SK-N-SH (cell line): ENCODE measurements at regions of chr7 and their contacts with region 1.

Region 1: DNA sequence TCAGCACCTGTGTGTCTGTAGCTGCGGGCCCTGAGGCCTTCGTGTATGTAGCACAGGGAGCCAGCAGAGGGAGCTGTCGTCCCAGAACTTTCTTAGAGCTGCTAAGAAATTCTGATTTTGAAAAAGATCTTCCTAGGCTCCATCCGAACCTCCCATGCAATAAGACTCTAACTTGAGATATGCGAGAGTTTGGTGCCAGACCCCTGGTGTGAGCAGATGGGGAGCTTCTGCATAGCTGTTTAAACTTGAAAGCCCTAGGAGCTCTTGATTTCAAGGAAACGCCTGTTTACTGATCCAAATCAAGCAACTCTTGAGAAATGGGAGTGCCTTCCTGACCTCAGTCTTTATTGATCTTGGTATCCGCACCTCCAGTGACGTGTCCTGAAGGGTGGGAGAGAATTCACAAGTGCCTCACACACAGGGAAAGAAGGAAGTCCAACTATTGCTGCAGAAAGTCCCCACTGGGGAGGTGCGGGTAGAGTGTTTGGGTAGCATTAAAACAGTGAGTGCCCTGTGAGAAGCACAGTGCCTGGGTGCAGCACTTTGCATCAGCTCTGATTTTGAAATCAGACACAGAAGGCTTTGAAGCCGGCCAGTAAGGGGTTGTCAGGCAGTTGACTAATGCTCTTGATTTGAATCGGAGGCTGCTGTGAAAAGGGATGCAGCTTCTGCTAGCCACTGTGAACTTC is 66.4 kb upstream of the STRIP2 start:
- DNase-seq: peak; percentile 80
- H3K4me3 ChIP-seq: no peak overlapping the region; a peak in 1 of 4 replicates
- H3K27ac ChIP-seq: no peak overlapping the region
- H3K4me1 ChIP-seq: peaks cover 0 to 3% of the 10 kb centered on the region in 2 experiments; a peak in 1 of 4 replicates
- H3K27me3 ChIP-seq: no peaks in the 10 kb centered on the region
- CTCF ChIP-seq: peak; percentile 99
- EP300 ChIP-seq: no peak
- RAD21 ChIP-seq: peak; percentile 96

Region 2: DNA sequence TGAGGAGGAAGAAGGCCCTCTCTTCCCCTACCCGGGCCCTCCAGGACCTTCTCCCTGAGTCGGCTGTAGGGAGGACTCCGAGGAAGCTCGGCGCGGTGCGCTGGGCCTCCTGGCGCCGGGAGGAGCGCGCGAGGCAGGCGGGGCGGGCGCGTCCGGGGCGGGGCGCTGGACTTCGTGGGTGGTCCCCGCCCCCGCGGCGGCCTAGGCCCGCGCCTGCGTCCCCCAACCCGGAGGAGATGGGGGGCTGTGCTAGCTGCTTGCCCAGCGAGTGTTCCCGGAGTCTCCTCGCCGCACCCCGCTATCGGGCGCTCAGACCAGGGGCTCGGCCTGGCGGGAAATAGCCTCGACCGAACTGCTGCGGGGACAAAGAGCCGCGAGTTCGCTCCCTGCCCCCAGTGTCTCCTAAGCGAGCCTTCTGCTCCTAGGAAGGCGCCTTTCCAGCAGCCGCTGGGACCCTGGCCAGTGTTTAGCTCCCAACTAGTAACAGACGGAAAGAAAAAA is 198.6 kb before region 1 on chr7:
- CTCF ChIA-PET with region 1: no interaction called
- POLR2A ChIA-PET with region 1: no interaction called
- DNase-seq: no peak
- H3K4me3 ChIP-seq: no peak overlapping the region
- H3K27ac ChIP-seq: no peak overlapping the region
- H3K4me1 ChIP-seq: no peaks in the 10 kb centered on the region
- H3K27me3 ChIP-seq: no peaks in the 10 kb centered on the region
- CTCF ChIP-seq: no peak
- EP300 ChIP-seq: no peak
- RAD21 ChIP-seq: no peak

Region 3: GRCh38 chr7:129332284-129333035 is 35.4 kb before region 1 on chr7:
- CTCF ChIA-PET with region 1: interaction called, 17 read pairs
- POLR2A ChIA-PET with region 1: no interaction called
- DNase-seq: no peak
- H3K4me3 ChIP-seq: no peak overlapping the region
- H3K27ac ChIP-seq: peak overlapping the region in 1 of 2 experiments; percentile 80; a peak in 2 of 4 replicates
- H3K4me1 ChIP-seq: no peaks in the 10 kb centered on the region
- H3K27me3 ChIP-seq: no peaks in the 10 kb centered on the region
- CTCF ChIP-seq: no peak
- EP300 ChIP-seq: no peak
- RAD21 ChIP-seq: no peak

Region 4: GRCh38 chr7:129351320-129351719 is 16.5 kb before region 1 on chr7:
- CTCF ChIA-PET with region 1: interaction called, 105 read pairs
- POLR2A ChIA-PET with region 1: no interaction called
- DNase-seq: no peak
- H3K4me3 ChIP-seq: no peak overlapping the region
- H3K27ac ChIP-seq: peak overlapping the region in 1 of 2 experiments; percentile 1; a peak in 1 of 4 replicates
- H3K4me1 ChIP-seq: no peaks in the 10 kb centered on the region
- H3K27me3 ChIP-seq: no peaks in the 10 kb centered on the region
- CTCF ChIP-seq: no peak
- EP300 ChIP-seq: no peak
- RAD21 ChIP-seq: no peak

Region 5: GRCh38 chr7:129394982-129395914 is 27.4 kb after region 1 on chr7:
- CTCF ChIA-PET with region 1: interaction called, 67 read pairs
- POLR2A ChIA-PET with region 1: no interaction called
- DNase-seq: no peak
- H3K4me3 ChIP-seq: no peak overlapping the region
- H3K27ac ChIP-seq: no peak overlapping the region
- H3K4me1 ChIP-seq: peaks cover 0 to 2% of the 10 kb centered on the region in 2 experiments; a peak in 2 of 4 replicates
- H3K27me3 ChIP-seq: no peaks in the 10 kb centered on the region
- CTCF ChIP-seq: no peak
- EP300 ChIP-seq: no peak
- RAD21 ChIP-seq: no peak

Region 6: DNA sequence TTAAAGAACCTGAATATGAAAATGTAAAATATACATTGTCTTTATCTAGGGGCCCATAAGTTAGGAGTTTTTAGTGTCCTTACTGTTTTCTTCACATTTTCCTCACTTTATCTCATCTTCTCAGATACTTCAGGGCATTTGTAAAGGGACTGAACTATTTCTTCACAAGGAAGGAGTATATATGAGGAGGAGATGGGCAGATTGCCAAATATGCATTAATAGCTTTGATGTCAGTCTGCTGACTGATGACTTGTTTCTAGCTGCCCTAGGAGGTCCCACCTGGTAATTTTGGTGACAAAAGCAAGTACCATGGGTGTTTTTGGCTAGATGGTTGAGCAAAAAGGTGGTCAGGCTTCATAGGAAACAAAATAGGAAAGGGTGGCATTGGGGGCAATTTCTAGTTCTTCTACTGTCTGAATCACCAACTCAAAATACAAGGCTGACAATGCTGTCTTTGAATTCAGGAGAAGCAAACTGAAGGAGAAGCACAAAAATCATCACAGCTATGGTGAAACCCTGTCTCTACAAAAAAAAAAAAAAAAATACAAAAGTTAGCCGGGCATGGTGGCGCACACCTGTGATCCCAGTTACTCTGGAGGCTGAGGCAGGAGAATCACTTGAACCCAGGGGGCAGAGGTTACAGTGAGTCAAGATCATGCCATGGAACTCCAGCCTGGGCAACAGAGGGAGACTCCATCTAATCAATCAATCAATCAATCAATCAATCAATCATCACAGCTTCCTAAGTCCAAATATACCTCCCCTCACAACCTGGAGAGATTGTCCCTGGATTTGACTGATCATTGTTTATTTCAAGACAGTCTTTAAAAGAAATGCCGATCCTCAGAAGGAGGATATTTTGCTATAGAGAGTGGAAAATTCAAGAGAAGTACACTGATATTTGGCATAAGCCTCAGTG is 56.1 kb after region 1 on chr7:
- CTCF ChIA-PET with region 1: interaction called, 19 read pairs
- POLR2A ChIA-PET with region 1: no interaction called
- DNase-seq: peak; percentile 43
- H3K4me3 ChIP-seq: no peak overlapping the region
- H3K27ac ChIP-seq: no peak overlapping the region
- H3K4me1 ChIP-seq: peaks cover 0 to 5% of the 10 kb centered on the region in 2 experiments; a peak in 2 of 4 replicates
- H3K27me3 ChIP-seq: no peaks in the 10 kb centered on the region
- CTCF ChIP-seq: no peak
- EP300 ChIP-seq: no peak
- RAD21 ChIP-seq: no peak

Region 7: DNA sequence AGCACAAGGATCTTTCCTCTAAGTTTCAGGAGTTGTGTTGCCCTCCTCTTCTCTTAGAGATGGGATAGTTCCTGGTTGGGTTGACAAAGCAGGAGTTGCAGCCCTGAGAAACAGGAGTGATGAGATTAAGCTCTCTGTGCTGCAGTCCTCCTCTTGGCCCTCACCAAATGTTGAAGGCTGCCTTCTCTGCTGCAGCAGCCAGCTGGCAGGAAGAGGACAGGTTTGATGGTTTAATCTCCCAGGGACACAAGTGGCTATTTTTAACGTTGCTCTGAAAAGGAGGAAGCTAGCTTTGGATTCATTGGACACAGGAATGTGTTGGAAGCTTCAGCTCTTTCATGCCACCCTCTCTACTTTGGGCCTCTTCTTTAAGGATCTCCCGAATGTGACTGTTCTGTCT is 75.8 kb after region 1 on chr7:
- CTCF ChIA-PET with region 1: interaction called, 12 read pairs
- POLR2A ChIA-PET with region 1: no interaction called
- DNase-seq: no peak
- H3K4me3 ChIP-seq: no peak overlapping the region
- H3K27ac ChIP-seq: no peak overlapping the region
- H3K4me1 ChIP-seq: peaks cover 4 to 6% of the 10 kb centered on the region in 2 experiments; a peak in 2 of 4 replicates
- H3K27me3 ChIP-seq: no peaks in the 10 kb centered on the region
- CTCF ChIP-seq: no peak
- EP300 ChIP-seq: no peak
- RAD21 ChIP-seq: no peak

Region 8: DNA sequence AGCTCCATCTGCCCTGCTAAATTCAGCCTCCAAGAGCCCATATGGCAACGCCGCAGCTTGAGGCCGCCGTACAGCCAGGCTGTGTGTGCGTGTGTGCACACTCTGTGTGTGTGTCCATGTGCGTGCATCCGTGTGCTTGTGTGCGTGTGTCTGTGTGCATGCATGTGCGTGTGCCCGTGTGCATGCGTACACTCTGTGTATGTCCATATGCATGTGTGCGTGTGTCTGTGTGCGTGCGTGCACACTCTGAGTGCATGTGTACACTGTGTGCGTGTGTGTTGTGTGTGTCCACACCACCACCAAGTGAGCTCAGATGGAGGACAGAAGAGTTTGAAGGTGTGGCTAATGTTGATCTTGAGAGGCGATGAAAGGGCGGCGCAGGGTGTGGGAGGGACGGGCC is 164.5 kb after region 1 on chr7:
- CTCF ChIA-PET with region 1: no interaction called
- POLR2A ChIA-PET with region 1: no interaction called
- DNase-seq: no peak
- H3K4me3 ChIP-seq: no peak overlapping the region
- H3K27ac ChIP-seq: no peak overlapping the region
- H3K4me1 ChIP-seq: peaks cover 0 to 9% of the 10 kb centered on the region in 2 experiments; a peak in 1 of 4 replicates
- H3K27me3 ChIP-seq: no peaks in the 10 kb centered on the region
- CTCF ChIP-seq: no peak
- EP300 ChIP-seq: no peak
- RAD21 ChIP-seq: no peak

Region 9: DNA sequence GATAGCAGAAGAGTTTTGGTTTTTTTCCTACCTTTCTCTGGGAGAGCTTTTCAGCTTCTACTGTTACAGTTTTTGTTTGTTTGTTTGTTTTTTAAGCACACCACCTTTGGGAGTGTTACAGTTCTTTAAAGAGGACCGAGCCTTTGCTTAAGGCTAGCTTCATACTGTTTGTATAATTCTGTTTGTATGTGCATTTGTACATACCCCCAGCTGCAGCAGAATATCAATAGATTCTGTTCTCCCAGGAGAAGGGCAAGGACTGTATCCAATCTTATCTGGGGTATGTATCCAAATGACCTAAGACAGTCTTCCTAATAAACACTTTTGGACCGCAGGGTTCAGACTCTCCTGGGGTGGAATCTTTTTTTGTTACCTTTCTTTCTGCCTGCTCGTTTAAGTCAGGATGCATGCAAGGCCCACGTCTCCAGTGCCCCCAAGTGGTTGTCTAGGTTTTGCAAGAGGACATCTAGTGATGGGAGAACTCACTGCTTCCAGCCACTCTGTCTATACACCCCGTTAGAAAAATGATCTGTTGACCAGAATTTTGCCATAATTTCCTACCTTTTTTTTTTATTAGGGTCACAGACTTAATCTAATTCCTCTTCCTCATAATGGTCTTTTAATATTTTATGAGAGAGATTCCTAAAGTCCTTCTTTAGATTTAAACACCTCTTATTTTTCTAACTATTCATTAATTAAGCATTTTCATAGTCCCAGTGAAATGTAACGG is 267.6 kb after region 1 on chr7:
- CTCF ChIA-PET with region 1: interaction called, 19 read pairs
- POLR2A ChIA-PET with region 1: no interaction called
- DNase-seq: peak; percentile 78
- H3K4me3 ChIP-seq: no peak overlapping the region
- H3K27ac ChIP-seq: no peak overlapping the region
- H3K4me1 ChIP-seq: no peaks in the 10 kb centered on the region
- H3K27me3 ChIP-seq: no peaks in the 10 kb centered on the region
- CTCF ChIP-seq: peak; percentile 98
- EP300 ChIP-seq: no peak
- RAD21 ChIP-seq: peak; percentile 90